Activated CD4-positive, alpha-beta T cell treated with anti-CD3 and anti-CD28 coated beads, Interleukin-2, amount 10 ng/mL, durations not matched to agents 24 days and 14 days (primary cell): ENCODE measurements at regions of chr1 and their contacts with region 1.

Region 1: DNA sequence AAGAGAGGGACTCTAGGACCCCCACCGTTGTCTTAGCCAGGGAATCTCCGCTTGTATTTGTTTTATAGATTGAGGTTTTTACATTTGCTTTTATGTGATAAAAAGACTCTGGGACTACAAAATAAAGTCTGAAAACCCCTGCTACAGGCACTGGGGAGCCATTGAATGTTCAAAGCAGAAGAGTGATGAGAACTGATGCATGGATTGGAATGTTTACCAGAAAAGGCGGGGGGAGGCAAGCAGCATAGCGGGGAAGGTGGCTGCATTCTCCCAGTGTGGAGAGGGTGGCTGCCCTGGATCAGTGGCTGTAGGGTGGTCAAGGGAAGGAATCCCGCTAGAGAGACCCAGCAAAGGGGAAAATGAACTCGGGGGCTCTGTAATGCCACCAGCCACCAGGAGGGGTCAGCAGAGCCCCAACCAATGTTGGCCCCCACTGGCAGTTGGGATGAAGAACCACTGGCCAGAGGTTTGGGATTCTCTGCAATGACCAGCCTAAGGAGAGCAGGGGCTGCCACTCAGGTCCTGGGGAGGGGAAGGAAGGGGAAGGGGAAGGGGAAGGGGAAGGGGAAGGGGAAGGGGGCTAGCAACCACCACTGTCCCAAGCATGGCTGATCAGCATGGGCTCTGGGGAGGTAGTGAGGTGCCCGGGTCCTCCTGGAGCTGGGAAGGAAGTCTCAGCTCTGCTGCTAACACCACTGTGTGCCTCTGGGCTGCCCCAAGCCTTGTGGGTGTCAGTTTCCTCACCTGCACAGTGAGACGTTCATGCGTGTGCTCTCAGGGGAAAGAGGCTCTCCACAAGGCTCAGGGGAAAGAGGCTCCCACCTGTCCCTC is 19.2 kb upstream of the PEF1 start:
- DNase-seq: peak; percentile 87
- H3K4me3 Mint-ChIP-seq: no peak overlapping the region
- H3K27ac Mint-ChIP-seq: no peak overlapping the region
- H3K4me1 Mint-ChIP-seq: no peaks in the 10 kb centered on the region
- H3K27me3 Mint-ChIP-seq: peaks cover 6% of the 10 kb centered on the region

Region 2: GRCh38 chr1:31707711-31708110 is 43.9 kb after region 1 on chr1:
- intact Hi-C with region 1: loop called (anchors 2 kb)
- DNase-seq: peak; percentile 64
- H3K4me3 Mint-ChIP-seq: peak overlapping the region; percentile 9
- H3K27ac Mint-ChIP-seq: no peak overlapping the region
- H3K4me1 Mint-ChIP-seq: peaks cover 31% of the 10 kb centered on the region
- H3K27me3 Mint-ChIP-seq: peaks cover 54% of the 10 kb centered on the region

Region 3: DNA sequence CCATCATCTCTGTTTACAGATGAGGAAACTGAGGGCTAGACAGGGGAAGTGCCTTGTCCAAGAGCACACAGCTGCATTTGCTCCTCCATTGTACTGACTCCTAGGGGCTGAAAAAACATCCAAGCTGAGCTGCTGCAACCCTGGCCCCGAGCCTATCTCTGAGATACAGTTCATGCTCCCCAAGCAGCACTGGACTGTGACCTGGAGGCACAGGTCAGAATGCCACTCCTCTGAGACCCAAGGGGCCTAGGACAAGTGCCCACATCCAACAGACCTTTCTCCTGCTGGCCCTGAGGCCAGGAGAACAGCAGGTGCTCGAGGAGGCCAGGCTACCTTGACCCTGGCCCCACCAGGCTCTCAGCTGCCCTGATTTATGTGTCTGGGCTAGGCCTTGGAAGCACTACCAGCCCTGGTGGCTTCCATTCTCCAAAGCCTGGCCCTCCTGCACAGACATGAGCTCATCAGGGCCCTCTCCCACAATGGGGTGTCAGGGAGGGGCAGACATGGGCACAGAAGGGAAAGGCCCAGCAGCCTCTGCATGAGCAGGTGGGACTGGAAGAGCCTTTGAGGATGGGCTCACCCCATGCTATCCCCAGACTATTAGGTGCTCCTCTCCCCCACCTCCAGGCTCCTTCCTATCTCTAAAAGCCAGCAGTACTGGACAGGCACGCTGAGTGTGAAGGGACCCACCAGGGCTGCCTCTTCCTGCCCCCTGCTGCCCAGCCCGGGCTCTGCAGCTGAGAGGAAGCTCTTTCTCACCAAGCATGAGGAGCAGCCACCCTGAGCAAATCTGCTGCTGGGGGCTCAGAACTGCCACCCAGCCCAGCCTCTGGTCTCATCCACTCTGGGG is 81.5 kb after region 1 on chr1:
- intact Hi-C with region 1: loop called (anchors 1 kb)
- DNase-seq: peak; percentile 88
- H3K4me3 Mint-ChIP-seq: no peak overlapping the region
- H3K27ac Mint-ChIP-seq: no peak overlapping the region
- H3K4me1 Mint-ChIP-seq: no peaks in the 10 kb centered on the region
- H3K27me3 Mint-ChIP-seq: peaks cover 13% of the 10 kb centered on the region